Posterior vena cava (tissue), 2 donors: ENCODE measurements at regions of chr11 and their contacts with region 1.

Region 1: DNA sequence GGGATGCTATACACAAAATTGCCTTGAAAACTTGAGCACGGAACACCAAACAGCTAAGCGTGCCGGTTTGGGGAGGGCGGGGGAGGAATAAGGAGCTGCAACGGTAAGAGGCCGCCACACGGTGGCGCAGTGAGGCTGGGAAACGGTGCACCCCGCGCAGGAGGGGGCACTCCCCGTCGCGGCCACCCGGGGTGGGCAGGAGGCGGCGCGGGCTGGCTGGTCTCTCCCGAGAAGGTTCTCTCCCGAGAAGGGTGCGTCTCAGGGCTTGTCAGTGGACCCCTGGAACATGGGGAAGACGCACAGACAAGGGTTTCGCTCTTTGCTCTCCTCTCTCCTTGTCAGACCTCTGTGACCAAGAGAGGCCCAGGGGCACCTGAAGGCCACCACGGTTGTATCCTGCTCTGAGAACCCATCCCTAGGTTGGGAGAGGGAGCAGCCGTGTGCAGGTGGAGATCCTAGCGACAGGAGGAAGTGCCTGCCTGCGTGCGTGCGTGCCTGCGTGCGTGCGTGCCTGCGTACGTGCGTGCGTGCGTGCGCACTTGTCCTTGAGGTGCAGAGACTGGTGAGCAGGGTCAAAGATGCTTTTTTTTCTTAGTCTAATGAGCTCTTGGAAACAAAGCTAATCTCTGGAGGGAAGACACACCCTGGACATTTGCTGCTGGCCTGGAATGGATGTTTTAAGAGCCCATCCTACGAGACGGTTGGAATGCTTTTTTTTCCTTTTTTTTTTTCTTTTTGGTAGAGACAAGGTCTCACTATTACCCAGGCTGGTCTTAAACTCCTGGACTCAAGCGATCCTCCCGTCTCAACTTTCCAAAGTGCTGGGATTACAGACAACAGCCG is 18.1 kb upstream of the JAM3 start:
- DNase-seq: peak; percentile 93

Region 2: DNA sequence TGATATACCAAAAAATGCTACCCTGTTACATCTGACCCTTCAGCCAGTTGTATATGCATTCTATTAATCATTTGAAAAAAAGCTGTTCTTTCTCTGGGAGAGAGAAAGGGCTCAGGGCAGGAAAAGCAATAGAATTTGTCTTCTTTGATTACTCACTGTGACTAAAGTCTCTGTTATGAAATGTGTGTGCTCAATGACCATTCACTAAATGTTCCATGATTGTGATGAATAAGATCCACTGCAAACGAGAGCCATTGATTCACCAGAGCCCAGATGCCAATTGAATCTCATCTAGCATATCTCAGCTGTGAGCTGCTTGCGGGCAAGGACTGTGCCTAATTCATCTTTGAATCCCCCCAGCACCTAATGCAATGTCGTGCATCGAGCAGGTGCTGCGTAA is 702.8 kb before region 1 on chr11:
- intact Hi-C with region 1: no loop called
- DNase-seq: no peak

Region 3: DNA sequence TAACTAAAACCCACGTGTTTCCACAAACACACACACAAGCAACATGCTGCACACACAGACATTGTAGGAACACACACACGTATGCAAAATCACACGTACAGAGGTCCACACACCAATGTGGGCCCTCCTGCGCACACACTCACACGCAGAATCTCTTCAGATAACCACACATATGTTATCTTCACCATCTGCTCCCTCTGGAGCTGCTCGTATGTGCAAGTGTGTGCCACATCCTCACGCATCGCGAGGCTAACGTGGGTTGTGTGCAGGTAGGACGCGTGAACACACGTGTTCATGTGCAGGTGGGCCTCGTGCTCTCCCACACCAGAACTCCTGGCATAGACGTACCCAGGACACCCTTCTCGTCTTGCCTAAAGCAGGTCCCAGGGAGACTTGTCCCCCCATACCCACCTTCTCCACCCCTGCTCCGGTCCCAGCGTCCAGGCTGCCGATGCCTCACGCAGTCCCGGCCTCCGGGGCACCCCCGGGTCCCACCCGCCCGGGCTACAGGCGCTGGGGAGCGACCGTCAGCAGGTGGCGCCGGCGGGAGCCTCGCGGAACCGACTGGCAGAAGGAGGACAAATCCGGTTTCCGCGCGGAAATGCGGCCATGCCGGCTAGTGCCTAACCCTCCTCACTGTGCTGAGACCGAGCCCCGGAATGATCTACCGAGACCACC is 83.7 kb before region 1 on chr11:
- intact Hi-C with region 1: loop called in 1 of 2 experiments (anchors 10 kb)
- DNase-seq: no peak

Region 4: GRCh38 chr11:134033696-134034491 is 16.9 kb before region 1 on chr11:
- intact Hi-C with region 1: no loop called
- DNase-seq: peak; percentile 93

Region 5: GRCh38 chr11:134139873-134140331 is 89.1 kb after region 1 on chr11:
- intact Hi-C with region 1: loop called (anchors 2 to 5 kb)
- DNase-seq: peak; percentile 81